Astrocyte of the cerebellum (primary cell): ENCODE measurements at regions of chr20 and their contacts with region 1.

Region 1: GRCh38 chr20:37333848-37334318 is 12.1 kb upstream of the SRC start:
- DNase-seq: no peak
- H3K4me3 ChIP-seq: no peak overlapping the region
- CTCF ChIP-seq: no peak

Region 2: GRCh38 chr20:37396416-37397075 is 62.7 kb after region 1 on chr20:
- in situ Hi-C with region 1: loop called (anchors 5 kb)
- DNase-seq: no peak
- H3K4me3 ChIP-seq: no peak overlapping the region
- CTCF ChIP-seq: no peak